Activated naive CD8-positive, alpha-beta T cell treated with anti-CD3 and anti-CD28 coated beads, Interleukin-2, amount 10 ng/mL, durations not matched to agents 7 days and 5 days (primary cell): ENCODE measurements at regions of chr9 and their contacts with region 1.

Region 1: GRCh38 chr9:137223078-137223970 is 1.3 kb upstream of the RNF208 start:
- DNase-seq: peak; percentile 98
- ATAC-seq: peak; percentile 87
- H3K4me3 Mint-ChIP-seq: peak overlapping the region; percentile 84
- H3K27ac Mint-ChIP-seq: peak overlapping the region; percentile 82
- H3K4me1 Mint-ChIP-seq: peaks cover 7% of the 10 kb centered on the region
- H3K27me3 Mint-ChIP-seq: peaks cover 2% of the 10 kb centered on the region

Region 2: DNA sequence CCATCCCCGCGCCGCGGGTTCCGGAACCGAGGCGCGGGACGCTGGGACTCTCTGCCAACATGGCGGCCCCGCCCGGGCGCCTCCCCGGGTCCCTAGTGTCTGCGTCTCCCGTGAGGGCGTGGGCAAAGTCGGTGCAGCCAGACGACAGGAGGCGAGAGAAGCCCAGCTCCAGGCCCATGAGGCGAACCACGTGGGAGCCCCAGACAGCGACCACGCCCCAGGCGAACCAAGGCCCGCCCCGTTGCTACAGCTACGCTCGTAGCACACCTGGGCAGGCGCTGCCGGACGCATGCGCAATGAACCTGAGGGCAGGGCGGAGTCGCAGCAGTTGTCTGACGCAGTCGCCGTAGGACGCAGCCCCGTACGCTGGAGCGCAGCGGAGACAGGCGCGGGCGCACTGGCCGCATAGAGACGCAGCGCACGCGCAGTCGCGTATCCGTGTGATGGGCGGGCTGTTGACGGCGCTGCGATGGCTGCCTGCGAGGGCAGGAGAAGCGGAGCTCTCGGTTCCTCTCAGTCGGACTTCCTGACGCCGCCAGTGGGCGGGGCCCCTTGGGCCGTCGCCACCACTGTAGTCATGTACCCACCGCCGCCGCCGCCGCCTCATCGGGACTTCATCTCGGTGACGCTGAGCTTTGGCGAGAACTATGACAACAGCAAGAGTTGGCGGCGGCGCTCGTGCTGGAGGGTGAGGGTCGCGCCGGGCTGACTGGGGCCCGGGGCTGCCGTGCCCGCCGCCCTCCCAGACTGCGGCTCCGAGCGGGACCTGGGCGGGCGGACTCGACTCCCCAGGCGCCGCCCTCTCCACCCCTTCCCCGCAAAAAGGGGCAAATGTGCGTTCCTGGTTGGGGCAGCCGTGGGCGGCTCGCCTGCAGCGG is 136.6 kb before region 1 on chr9 and contains the start of gene MAN1B1:
- POLR2A ChIA-PET with region 1: interaction called, 20 read pairs
- DNase-seq: peak; percentile 99
- ATAC-seq: peak; percentile 89
- H3K4me3 Mint-ChIP-seq: peak within 1 kb of the TSS; percentile 92
- H3K27ac Mint-ChIP-seq: peak within 1 kb of the TSS; percentile 93
- H3K4me1 Mint-ChIP-seq: peaks cover 23% of the 10 kb centered on the region
- H3K27me3 Mint-ChIP-seq: no peaks in the 10 kb centered on the region
- total RNA-seq, gene MAN1B1: 63.2 to 63.9 TPM

Region 3: GRCh38 chr9:137095664-137096517 is 127.4 kb before region 1 on chr9:
- POLR2A ChIA-PET with region 1: interaction called, 16 read pairs
- DNase-seq: peak; percentile 87
- ATAC-seq: peak; percentile 99
- H3K4me3 Mint-ChIP-seq: peak overlapping the region; percentile 85
- H3K27ac Mint-ChIP-seq: peak overlapping the region; percentile 96
- H3K4me1 Mint-ChIP-seq: peaks cover 16% of the 10 kb centered on the region
- H3K27me3 Mint-ChIP-seq: no peaks in the 10 kb centered on the region

Region 4: DNA sequence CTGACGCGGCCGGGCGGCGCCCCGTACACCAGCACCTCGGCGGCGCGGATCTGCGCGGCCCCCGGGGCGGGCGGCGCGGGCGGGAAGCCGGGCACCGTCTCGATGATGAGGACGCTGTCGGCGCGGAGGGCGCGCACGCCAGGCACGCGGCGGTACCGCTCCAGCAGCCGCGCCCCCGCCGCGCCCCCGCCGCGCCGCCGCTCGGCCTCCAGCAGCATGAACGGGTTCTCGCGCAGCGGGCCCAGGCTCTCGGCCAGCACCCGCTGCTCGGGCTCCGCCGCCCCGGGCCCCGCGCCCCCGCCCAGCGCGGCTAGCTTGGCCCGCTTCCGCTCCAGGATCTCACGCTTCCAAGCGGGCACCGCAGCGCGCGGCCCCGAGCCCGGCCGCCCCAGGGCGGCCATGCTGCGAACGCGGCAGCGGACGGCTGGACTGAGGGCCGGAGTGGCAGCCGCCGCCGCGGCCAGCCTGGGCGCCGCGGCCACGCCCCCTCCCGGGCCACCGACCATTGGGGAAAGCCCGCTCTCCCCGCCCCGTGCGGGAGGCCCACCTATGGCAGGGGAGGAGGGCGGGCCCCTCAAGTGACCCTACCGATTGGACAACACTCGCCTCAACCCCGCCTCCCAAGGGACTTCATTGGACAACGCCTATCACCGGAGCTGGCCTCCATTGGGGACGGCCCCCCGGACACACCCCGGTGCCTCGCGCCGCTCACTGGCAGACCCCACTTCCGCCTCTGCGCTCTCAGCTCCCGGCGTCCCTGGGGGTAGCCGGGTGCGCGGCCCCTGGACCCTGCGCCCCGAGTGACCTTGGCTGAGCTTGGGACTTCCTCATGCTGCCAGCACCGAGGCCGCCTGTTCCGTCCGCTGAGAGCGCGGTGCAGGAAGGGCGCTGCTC is 22.8 kb before region 1 on chr9 and contains the start of gene TPRN:
- POLR2A ChIA-PET with region 1: interaction called, 31 read pairs
- DNase-seq: peak; percentile 95
- ATAC-seq: peak; percentile 95
- H3K4me3 Mint-ChIP-seq: peak within 1 kb of the TSS; percentile 84
- H3K27ac Mint-ChIP-seq: peak within 1 kb of the TSS; percentile 86
- H3K4me1 Mint-ChIP-seq: peaks cover 20% of the 10 kb centered on the region
- H3K27me3 Mint-ChIP-seq: no peaks in the 10 kb centered on the region
- total RNA-seq, gene TPRN: 11.2 to 14.7 TPM